B cell (primary cell): ENCODE measurements at regions of chr4 and their contacts with region 1.

Region 1: DNA sequence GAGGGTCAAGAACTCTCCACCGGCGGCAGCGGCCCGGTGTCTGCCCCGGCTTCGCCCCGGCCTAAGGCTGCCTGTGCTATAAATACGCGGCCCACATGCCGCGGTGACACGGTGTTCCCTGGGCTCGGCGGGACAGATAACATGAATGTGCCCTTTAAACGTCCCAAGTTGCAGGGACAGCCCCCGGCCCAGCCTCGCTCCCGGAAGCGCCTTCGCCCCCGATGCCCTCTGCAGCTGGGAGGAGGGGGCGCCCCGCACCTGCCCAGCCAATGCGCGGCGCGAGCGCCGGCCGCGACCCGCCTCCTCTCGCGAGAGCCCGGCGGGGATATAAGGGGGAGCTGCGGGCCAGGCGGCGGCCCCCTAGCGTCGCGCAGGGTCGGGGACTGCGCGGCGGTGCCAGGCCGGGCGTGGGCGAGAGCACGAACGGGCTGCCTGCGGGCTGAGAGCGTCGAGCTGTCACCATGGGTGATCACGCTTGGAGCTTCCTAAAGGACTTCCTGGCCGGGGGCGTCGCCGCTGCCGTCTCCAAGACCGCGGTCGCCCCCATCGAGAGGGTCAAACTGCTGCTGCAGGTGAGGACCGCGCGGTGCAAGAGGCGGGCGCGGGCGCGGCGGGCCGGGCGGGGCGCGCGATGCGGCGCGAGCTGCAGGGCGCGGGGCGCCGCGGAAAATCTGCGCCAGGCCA is at the start of gene SLC25A4:
- DNase-seq: peak; percentile 94
- ATAC-seq: peak; percentile 98
- H3K4me3 ChIP-seq: peak within 1 kb of the TSS; percentile 55 to 83 (median 81)
- H3K4me3 Mint-ChIP-seq: peak within 1 kb of the TSS; percentile 97
- H3K27ac ChIP-seq: peak within 1 kb of the TSS; percentile 66 to 76
- H3K27ac Mint-ChIP-seq: peak within 1 kb of the TSS; percentile 90
- H3K4me1 ChIP-seq: peaks cover 13% of the 10 kb centered on the region in 2 donors
- H3K4me1 Mint-ChIP-seq: peaks cover 15% of the 10 kb centered on the region
- H3K27me3 ChIP-seq: peaks cover 0 to 4% (median 0%) of the 10 kb centered on the region in 4 experiments
- H3K27me3 Mint-ChIP-seq: peaks cover 8% of the 10 kb centered on the region
- CTCF ChIP-seq: peak; percentile 76
- total RNA-seq, gene SLC25A4: 7.3 and 8.2 TPM in 2 replicates

Region 2: DNA sequence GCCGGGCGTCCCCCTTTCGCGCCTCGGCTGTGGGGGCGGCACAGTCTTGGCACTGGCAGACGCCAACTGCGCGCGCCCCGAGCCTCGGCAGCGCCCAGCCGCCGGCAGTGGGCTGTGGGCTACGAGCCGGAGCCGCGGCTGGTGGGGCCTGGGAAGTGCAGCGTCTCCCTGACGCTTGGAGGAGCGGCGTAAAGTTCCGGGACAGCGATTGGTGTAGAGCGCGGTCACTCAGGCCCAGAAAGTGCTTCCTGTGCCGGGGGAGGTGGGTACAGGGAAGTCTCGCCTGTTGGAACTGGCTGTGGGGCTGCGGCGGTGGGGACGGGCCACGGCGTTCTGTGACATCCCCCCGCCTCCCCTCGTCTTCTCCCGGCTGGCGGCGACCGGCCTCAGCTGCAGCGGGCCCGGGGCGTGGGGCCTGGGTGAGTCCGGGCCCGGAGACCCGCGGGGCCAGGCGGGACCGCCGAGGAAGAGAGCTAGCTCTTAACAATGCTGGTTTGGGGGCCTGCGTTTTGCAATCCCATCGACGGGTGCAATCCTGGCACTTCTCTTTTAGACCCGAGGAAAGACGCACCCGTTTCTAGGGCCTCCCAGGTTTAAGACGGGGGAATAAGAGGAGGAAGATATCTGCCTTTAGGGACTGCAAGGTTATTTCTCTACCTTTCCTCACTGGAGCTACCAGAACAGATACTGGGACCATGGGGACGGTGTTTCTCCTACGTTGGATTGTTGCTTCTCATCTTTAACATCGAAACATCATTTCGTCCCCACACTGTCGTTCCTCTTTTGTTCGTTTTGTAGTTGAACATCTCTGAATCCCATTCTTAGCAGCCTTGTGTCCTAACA is 1483.8 kb before region 1 on chr4 and contains the starts of genes RWDD4 and TRAPPC11:
- CTCF ChIA-PET with region 1: no interaction called
- POLR2A ChIA-PET with region 1: no interaction called
- intact Hi-C with region 1: loop called (anchors 2 kb)
- DNase-seq: peak; percentile 97
- ATAC-seq: peak; percentile 98
- H3K4me3 ChIP-seq: peak within 1 kb of the TSS; percentile 62 to 91 (median 87)
- H3K4me3 Mint-ChIP-seq: peak within 1 kb of the TSS; percentile 93
- H3K27ac ChIP-seq: peak within 1 kb of the TSS; percentile 70 to 90
- H3K27ac Mint-ChIP-seq: peak within 1 kb of the TSS; percentile 93
- H3K4me1 ChIP-seq: peaks cover 17 to 24% of the 10 kb centered on the region in 2 donors
- H3K4me1 Mint-ChIP-seq: peaks cover 26% of the 10 kb centered on the region
- H3K27me3 ChIP-seq: no peaks in the 10 kb centered on the region
- H3K27me3 Mint-ChIP-seq: no peaks in the 10 kb centered on the region
- CTCF ChIP-seq: no peak
- total RNA-seq, gene RWDD4: 15.7 and 16.3 TPM in 2 replicates
- total RNA-seq, gene TRAPPC11: 53.8 and 56.6 TPM in 2 replicates

Region 3: DNA sequence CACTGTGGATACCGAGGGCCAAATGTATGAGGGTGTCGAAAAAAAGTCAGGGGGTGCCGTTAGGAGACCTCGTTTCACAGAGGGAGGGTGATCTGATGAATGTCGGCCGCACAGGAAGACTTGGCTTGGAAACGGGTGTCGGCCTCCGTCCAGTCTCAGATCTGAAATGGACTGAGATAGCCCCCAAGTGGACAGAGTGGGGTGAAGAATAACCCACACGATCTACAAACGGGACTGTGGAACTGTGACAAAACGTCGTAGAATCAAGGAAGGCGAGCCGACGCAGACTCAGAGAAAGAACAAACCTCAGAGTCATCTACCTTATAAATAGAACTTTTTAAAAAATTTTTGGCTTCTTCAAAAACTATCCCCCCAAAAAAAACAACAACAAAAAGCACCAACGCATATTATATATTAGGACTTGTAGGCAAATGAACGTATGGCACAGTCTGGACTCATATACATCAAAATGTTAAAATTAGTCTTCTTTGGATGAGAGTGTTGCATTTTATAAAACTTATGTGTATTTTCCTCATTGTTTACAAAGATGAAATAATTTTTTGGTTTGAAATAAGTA is 604.9 kb before region 1 on chr4:
- CTCF ChIA-PET with region 1: no interaction called
- POLR2A ChIA-PET with region 1: no interaction called
- intact Hi-C with region 1: no loop called
- DNase-seq: peak; percentile 90
- ATAC-seq: peak; percentile 71
- H3K4me3 ChIP-seq: peak overlapping the region; percentile 74 to 98 (median 81)
- H3K4me3 Mint-ChIP-seq: peak overlapping the region; percentile 96
- H3K27ac ChIP-seq: peak overlapping the region; percentile 98
- H3K27ac Mint-ChIP-seq: peak overlapping the region; percentile 100
- H3K4me1 ChIP-seq: peaks cover 33 to 38% of the 10 kb centered on the region in 2 donors
- H3K4me1 Mint-ChIP-seq: peaks cover 42% of the 10 kb centered on the region
- H3K27me3 ChIP-seq: no peaks in the 10 kb centered on the region
- H3K27me3 Mint-ChIP-seq: no peaks in the 10 kb centered on the region
- CTCF ChIP-seq: peak; percentile 61

Region 4: DNA sequence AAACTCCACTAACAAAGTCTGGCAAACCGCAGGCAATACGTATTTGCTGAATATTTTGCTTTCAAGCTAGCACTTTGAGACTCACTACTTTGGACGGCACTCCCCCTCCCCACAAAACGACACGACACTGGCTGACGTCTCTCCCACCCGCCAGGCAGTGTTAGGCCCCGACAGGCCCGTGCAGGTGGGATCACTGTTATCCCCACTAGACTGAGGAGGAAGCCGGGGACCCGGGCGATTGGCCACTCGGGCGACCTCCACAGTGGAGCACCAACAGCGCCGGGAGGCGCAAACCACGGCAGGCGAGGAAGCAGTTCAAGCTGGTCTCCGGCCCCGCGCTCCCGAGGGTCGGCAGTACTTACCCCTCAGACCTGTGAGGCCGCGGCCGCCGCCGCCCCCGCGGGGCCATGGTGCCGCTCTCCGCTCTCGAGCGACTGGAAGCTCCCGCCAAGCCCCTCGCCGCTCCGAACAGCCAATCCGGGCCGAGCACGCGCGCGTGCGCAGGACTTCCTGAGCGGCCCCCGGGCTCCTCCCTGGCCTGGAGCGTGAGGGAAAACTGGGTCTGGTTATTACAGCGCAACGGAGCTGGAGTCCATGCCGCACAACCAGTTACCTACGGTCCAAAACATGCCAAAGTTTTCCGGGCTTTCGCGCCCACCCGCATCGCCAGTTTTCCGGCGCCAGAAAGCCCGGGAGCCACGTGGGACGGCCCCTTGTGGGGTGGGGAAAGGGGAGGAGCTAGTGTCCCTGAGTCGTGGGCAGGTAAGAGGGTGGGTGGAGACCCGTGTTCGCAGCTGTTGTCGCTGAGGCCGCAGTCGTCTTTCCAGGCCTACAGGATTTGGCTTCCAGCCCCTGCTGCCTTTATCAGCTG is 409.2 kb before region 1 on chr4 and contains the start of gene CENPU:
- CTCF ChIA-PET with region 1: interaction called, 3 read pairs
- POLR2A ChIA-PET with region 1: interaction called, 3 read pairs
- intact Hi-C with region 1: loop called (anchors 5 kb)
- DNase-seq: peak; percentile 96
- ATAC-seq: peak; percentile 95
- H3K4me3 ChIP-seq: peak within 1 kb of the TSS; percentile 65 to 76 (median 72)
- H3K4me3 Mint-ChIP-seq: peak within 1 kb of the TSS; percentile 93
- H3K27ac ChIP-seq: peak within 1 kb of the TSS; percentile 1 to 52
- H3K27ac Mint-ChIP-seq: peak within 1 kb of the TSS; percentile 93
- H3K4me1 ChIP-seq: peaks cover 7 to 12% of the 10 kb centered on the region in 2 donors
- H3K4me1 Mint-ChIP-seq: peaks cover 16% of the 10 kb centered on the region
- H3K27me3 ChIP-seq: no peaks in the 10 kb centered on the region
- H3K27me3 Mint-ChIP-seq: no peaks in the 10 kb centered on the region
- CTCF ChIP-seq: no peak
- total RNA-seq, gene CENPU: 1.6 and 3.2 TPM in 2 replicates

Region 5: DNA sequence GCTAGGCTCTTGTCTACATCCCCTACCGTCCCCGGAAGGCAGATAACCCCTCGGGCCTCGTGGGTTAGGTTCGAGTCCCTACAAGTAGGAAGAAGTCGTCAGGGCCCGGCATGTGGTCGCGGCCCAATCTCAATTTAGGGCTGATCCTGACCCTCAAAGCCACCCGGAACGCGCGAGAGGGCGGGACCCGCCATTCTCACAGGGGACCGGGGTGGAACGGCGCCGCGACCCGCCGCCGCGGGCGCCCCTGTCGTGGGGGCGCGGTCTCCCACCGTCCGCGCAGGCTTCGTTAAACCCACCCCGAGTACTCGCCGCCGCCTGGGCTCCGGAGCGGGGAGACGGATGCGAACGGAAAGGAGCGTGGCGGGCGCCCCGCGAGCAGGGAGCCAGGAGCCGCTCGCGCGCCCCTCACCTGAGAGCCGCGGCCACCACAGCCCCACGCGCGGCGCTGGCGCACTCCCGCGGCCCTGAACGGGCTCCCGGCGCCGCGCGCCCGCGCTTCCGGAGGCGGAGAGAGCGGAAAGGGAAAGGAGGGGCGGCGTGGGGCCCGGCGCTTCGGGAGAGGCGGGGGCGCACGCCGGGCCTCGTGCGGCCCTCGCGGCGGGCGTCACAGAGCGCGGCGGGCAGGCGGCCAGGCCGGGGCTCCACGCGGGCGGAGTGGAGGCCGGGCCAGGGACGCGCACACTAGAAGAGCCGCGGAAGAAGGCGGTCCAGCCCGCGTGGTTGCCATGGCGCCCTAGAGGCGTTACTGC is 60.6 kb after region 1 on chr4 and contains the start of gene CFAP97:
- CTCF ChIA-PET with region 1: interaction called, 3 read pairs
- POLR2A ChIA-PET with region 1: interaction called, 4 read pairs
- intact Hi-C with region 1: loop called (anchors 2 kb)
- DNase-seq: peak; percentile 90
- ATAC-seq: peak; percentile 81
- H3K4me3 ChIP-seq: peak within 1 kb of the TSS; percentile 58 to 73 (median 71)
- H3K4me3 Mint-ChIP-seq: peak within 1 kb of the TSS; percentile 97
- H3K27ac ChIP-seq: peak within 1 kb of the TSS; percentile 76 to 90
- H3K27ac Mint-ChIP-seq: peak within 1 kb of the TSS; percentile 98
- H3K4me1 ChIP-seq: peaks cover 31 to 45% of the 10 kb centered on the region in 2 donors
- H3K4me1 Mint-ChIP-seq: peaks cover 45% of the 10 kb centered on the region
- H3K27me3 ChIP-seq: no peaks in the 10 kb centered on the region
- H3K27me3 Mint-ChIP-seq: no peaks in the 10 kb centered on the region
- CTCF ChIP-seq: peak; percentile 10
- total RNA-seq, gene CFAP97: 32.0 and 32.4 TPM in 2 replicates

Region 6: DNA sequence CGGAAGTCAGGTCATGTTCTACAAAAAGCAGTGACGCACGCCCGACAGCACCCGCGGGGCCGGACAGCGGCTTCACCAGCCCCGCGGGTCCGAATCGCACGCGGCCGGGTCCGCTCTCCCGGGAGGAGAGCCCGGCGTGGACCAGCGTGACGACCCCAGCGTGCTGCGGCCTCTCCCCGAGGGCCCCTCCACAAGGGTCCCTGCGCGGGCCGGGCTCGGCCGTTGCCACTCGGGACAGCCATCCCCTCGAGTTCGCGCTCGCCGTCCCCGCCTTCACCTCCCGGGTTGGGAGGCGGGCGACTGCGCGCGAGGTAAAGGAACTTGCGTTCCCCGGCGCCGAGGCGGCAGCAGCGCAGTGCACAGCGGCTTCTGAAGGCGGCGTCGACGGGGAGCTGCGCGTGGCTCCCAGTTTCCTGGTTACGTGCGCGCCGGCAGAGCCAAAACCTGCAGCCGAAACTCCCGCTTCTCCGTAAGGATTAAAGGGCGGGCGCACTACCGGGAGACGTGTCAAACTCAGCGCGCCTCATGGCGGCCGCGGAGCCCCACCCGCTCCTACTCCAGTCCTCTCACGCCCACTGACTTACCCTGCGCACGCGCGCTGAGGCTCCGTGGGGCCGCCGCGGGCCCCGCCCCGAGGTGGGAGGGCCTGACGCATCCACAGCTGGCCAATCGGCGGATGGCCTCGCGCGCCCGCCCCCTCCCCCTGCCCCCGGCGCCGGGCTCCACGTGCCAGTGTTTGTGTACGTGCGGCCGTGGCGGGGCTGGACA is 253.1 kb after region 1 on chr4:
- CTCF ChIA-PET with region 1: no interaction called
- POLR2A ChIA-PET with region 1: no interaction called
- intact Hi-C with region 1: loop called (anchors 1 kb)
- DNase-seq: peak; percentile 97
- ATAC-seq: peak; percentile 87
- H3K4me3 ChIP-seq: peak overlapping the region; percentile 79 to 98 (median 89)
- H3K4me3 Mint-ChIP-seq: peak overlapping the region; percentile 92
- H3K27ac ChIP-seq: peak overlapping the region; percentile 97 to 99
- H3K27ac Mint-ChIP-seq: peak overlapping the region; percentile 94
- H3K4me1 ChIP-seq: peaks cover 26% of the 10 kb centered on the region in 2 donors
- H3K4me1 Mint-ChIP-seq: peaks cover 54% of the 10 kb centered on the region
- H3K27me3 ChIP-seq: no peaks in the 10 kb centered on the region
- H3K27me3 Mint-ChIP-seq: no peaks in the 10 kb centered on the region
- CTCF ChIP-seq: no peak

Region 7: DNA sequence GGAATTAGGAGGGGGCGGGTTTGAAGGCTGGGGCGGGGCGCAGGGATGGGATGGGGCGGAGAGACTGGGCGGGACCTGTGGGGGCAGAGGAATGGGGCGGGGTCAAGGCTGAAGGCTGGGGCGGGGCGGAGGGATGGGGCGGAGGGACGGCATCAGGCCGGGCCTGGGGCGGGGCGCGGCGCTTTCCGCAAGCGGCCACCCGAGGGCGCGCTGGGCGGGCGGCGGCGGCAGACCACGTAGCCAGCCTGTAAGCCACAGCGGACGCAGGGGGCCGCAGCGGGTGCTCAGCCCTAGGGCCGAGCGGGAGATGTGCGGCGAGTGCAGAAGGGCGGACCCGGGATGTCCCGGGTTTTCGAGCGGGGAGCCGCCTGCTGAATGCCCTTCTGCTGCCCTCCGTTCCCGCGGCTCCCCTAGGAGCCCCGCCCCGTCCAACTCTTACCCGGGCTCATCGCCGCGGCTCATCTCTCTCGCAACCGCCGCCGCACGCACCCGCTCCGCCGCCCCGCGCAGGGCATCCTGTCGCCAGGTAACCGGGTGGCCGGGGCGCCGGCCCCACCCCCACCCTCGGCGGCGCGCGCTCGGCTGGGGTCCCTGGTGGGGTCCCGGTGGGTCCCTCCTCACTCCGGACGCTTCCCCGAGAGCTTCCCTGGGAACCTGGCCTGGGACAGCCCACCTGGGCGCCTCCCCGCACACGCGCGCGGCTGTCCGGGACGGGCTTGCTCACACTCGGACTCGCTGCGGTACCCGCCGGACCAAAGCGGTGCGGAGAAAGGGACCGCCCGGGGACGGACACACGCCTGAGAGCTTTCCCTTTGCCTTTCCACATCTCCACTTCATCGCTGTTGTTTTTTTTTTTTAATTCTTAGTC is 328.4 kb after region 1 on chr4 and contains the start of gene CCDC110:
- CTCF ChIA-PET with region 1: no interaction called
- POLR2A ChIA-PET with region 1: no interaction called
- intact Hi-C with region 1: loop called (anchors 2 kb)
- DNase-seq: peak; percentile 94
- ATAC-seq: peak; percentile 95
- H3K4me3 ChIP-seq: peak within 1 kb of the TSS; percentile 28 to 87 (median 67)
- H3K4me3 Mint-ChIP-seq: peak within 1 kb of the TSS; percentile 95
- H3K27ac ChIP-seq: peak within 1 kb of the TSS; percentile 1 to 58
- H3K27ac Mint-ChIP-seq: peak within 1 kb of the TSS; percentile 83
- H3K4me1 ChIP-seq: peaks cover 11 to 17% of the 10 kb centered on the region in 2 donors
- H3K4me1 Mint-ChIP-seq: peaks cover 17% of the 10 kb centered on the region
- H3K27me3 ChIP-seq: peaks cover 0 to 5% (median 0%) of the 10 kb centered on the region in 4 experiments
- H3K27me3 Mint-ChIP-seq: no peaks in the 10 kb centered on the region
- CTCF ChIP-seq: peak; percentile 76
- total RNA-seq, gene CCDC110: 1.6 and 2.3 TPM in 2 replicates